HEK293T (cell line): ENCODE measurements at regions of chr17 and their contacts with region 1.

Region 1: GRCh38 chr17:21043286-21044232 is 748 bp upstream of the USP22 start:
- DNase-seq: peak; percentile 70

Region 2: DNA sequence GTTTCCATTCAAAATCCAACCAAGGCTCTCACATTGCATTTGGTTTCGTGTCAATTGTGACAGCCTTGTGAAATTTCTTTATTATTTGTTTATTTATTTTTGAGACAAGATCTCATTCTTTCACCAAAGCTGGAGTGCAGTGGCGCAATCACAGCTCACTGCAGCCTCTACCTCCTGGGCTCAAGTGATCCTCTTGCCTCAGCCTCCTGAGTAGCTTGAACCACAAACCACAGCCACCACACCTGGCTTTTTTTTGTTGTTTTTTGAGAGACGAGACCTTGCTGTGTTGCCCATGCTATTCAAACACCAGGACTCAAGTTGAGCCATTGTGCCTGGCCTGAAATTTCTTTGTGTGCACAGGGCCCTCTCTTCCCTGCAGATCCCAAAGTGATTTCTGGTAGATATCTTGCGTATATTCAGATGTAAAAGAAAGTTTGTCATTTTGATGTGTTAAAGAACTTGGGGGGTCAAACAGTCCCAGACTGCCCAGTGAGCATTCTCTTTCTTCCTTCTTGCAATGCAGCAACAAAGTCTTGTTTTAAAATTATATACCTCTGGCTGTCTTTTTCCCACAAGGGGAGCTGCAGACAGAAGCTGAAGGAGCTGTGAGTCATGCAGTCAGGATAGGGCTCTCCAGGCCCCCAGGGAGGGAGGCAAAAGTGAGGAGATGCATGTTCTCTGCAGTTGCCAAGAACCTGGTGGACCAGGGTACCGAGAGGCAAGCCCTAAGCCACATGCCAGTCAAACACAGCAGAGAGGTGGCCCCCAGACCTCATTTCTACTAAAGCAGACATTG is 14.7 kb after region 1 on chr17:
- CTCF ChIA-PET with region 1: interaction called, 5 read pairs
- POLR2A ChIA-PET with region 1: interaction called, 19 read pairs
- DNase-seq: peak; percentile 24

Region 3: GRCh38 chr17:21119247-21119918 is 75.8 kb after region 1 on chr17:
- CTCF ChIA-PET with region 1: interaction called, 6 read pairs
- POLR2A ChIA-PET with region 1: interaction called, 13 read pairs
- DNase-seq: peak; percentile 76

Region 4: GRCh38 chr17:21149621-21150020 is 106.1 kb after region 1 on chr17:
- CTCF ChIA-PET with region 1: no interaction called
- POLR2A ChIA-PET with region 1: no interaction called
- DNase-seq: no peak

Region 5: DNA sequence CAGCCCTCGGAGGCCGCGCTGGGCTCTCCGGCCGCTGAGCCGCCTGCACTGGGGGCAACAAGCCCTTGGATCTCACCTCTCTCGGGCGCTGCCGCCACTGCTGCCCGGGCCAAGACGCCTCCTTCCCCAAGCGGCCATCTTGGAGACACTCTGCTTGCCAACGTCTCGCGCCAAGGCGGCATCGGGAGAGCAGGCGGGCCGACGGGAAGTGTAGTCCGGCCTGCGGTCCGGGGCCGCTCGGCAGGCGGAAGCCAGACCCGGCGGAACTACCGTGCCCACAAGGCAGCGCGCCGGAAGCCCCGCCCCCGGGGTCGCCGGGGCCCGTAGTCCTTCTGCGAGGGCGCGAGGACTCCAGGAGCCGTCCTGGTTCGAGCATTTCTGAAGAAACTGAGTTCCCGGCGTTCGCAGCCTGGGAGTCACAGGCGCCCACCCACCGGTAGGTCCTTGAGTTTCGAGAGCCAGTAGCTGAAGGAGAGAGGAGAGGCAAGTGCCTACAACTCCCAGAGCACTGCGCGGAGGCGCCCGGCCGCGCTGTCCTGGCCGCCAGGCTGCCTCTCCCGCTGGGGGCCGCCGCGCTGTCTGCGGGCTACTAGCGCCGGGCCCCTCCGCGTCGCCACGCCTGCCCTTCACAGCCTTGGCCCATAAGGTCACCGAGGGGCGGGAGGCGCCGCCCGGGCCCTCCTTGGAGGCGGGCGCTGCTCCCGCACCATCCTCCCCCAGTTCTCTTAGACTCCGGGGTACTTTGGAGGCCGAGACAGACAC is 170.6 kb after region 1 on chr17 and contains the start of gene TMEM11:
- CTCF ChIA-PET with region 1: no interaction called
- POLR2A ChIA-PET with region 1: interaction called, 13 read pairs
- DNase-seq: peak; percentile 97